Natural killer cell (primary cell): ENCODE measurements at regions of chr14 and their contacts with region 1.

Region 1: GRCh38 chr14:104826189-104826860 is 25.4 kb downstream of the ZBTB42 start:
- DNase-seq: peak; percentile 94 to 95
- ATAC-seq: peak; percentile 92 to 95 (median 93)
- H3K4me3 ChIP-seq: peak overlapping the region; percentile 46
- H3K4me3 Mint-ChIP-seq: peak overlapping the region; percentile 91
- H3K27ac ChIP-seq: no peak overlapping the region
- H3K27ac Mint-ChIP-seq: peak overlapping the region in 1 of 2 donors; percentile 86
- H3K4me1 ChIP-seq: peaks cover 25% of the 10 kb centered on the region
- H3K4me1 Mint-ChIP-seq: peaks cover 7 to 23% of the 10 kb centered on the region in 2 donors
- H3K27me3 ChIP-seq: peaks cover 9% of the 10 kb centered on the region
- H3K27me3 Mint-ChIP-seq: peaks cover 0 to 13% of the 10 kb centered on the region in 2 donors
- CTCF ChIP-seq: peak; percentile 86

Region 2: GRCh38 chr14:104752735-104753531 is 73.4 kb before region 1 on chr14 and contains the start of gene SIVA1:
- intact Hi-C with region 1: no loop called
- DNase-seq: peak; percentile 98 to 100
- ATAC-seq: peak; percentile 88 to 95 (median 88)
- H3K4me3 ChIP-seq: peak within 1 kb of the TSS; percentile 87
- H3K4me3 Mint-ChIP-seq: peak within 1 kb of the TSS; percentile 97
- H3K27ac ChIP-seq: peak within 1 kb of the TSS; percentile 84
- H3K27ac Mint-ChIP-seq: peak within 1 kb of the TSS; percentile 90 to 97
- H3K4me1 ChIP-seq: peaks cover 37% of the 10 kb centered on the region
- H3K4me1 Mint-ChIP-seq: peaks cover 25 to 34% of the 10 kb centered on the region in 2 donors
- H3K27me3 ChIP-seq: no peaks in the 10 kb centered on the region
- H3K27me3 Mint-ChIP-seq: no peaks in the 10 kb centered on the region
- CTCF ChIP-seq: no peak
- total RNA-seq, gene SIVA1: 59.7 to 74.8 (median 59.8) TPM

Region 3: DNA sequence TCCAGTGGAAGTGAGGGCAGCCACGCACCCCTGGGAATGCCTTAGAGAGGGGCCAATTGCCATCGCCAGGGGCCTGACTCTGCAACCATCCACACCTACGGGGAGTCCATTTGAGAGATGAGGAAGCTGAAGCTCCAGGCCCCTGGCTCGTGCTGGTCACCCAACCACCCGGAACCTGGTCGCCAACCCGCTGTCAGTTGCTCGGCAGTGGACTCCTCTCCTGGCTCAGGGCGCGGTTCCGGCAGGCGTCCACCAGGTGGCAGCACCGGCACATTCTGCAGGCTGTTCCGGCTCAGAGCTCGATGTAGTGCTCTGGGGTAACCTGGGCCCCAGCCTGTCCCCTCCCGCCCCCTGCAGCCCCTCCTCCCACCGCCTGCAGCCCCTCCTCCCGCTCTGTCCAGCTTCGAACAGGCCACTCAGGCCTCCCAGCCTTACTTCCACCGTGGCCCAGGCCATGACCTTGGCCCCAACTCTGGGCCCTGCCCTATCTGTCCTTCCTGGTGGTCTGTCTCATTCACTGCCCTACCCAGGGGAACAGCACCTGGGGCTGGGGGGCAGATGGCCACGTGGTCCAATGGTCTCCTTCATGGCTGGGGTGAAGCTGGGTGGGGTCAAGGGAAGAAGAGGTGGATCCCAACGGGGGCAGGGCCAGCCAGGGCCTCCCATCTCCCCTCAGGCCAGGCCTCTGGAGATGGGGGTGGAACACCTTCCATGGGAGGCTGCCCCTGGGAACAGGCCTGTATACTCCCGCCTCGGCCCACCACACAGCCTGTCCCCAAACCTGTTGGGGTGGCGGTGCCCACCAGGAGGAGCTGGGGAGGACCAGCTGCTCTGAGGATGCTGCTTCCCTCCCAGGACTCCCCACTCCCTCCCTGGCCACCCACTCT is 57.6 kb before region 1 on chr14:
- intact Hi-C with region 1: loop called (anchors 1 kb)
- DNase-seq: peak; percentile 92 to 93
- ATAC-seq: peak; percentile 94 to 99 (median 95)
- H3K4me3 ChIP-seq: no peak overlapping the region
- H3K4me3 Mint-ChIP-seq: no peak overlapping the region
- H3K27ac ChIP-seq: no peak overlapping the region
- H3K27ac Mint-ChIP-seq: peak overlapping the region in 1 of 2 donors; percentile 42
- H3K4me1 ChIP-seq: peaks cover 8% of the 10 kb centered on the region
- H3K4me1 Mint-ChIP-seq: no peaks in the 10 kb centered on the region
- H3K27me3 ChIP-seq: no peaks in the 10 kb centered on the region
- H3K27me3 Mint-ChIP-seq: no peaks in the 10 kb centered on the region
- CTCF ChIP-seq: peak; percentile 89